ENCODE measurements at regions of chr10 and their contacts with region 1.

Region 1: GRCh38 chr10:80684259-80684658 is 146.6 kb downstream of the SH2D4B start:
- DNase-seq: no peak
- H3K4me3 ChIP-seq: no peak overlapping the region
- H3K27ac ChIP-seq: no peak overlapping the region
- H3K4me1 ChIP-seq: no peaks in the 10 kb centered on the region
- H3K27me3 ChIP-seq: no peaks in the 10 kb centered on the region
- CTCF ChIP-seq: no peak

Region 2: DNA sequence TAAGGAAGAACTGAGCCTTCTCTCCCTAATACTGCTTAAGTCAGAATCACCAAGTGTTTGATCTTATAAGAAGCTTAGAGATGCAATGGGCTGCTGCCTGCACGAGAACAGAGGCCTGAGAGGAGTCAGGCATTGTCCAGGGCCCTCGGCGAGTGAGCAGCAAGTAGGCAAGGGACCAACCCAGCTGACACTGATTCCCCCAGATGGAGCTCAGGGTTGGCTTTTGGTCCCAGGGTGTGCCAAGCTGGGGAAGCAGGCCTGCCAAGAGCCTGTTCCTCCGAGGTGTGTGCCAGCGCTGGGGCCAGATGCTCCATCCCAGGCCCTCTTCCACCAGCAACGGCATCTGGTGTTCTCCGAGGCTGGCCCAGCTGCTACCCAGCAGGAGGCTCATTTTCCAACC is 1837.5 kb before region 1 on chr10:
- intact Hi-C with region 1: loop called (anchors 10 kb)
- DNase-seq: no peak
- H3K4me3 ChIP-seq: no peak overlapping the region
- H3K27ac ChIP-seq: no peak overlapping the region
- H3K4me1 ChIP-seq: no peaks in the 10 kb centered on the region
- H3K27me3 ChIP-seq: no peaks in the 10 kb centered on the region
- CTCF ChIP-seq: no peak

Region 3: GRCh38 chr10:80599424-80599847 is 84.8 kb before region 1 on chr10:
- intact Hi-C with region 1: no loop called
- DNase-seq: no peak
- H3K4me3 ChIP-seq: no peak overlapping the region
- H3K27ac ChIP-seq: no peak overlapping the region
- H3K4me1 ChIP-seq: no peaks in the 10 kb centered on the region
- H3K27me3 ChIP-seq: no peaks in the 10 kb centered on the region
- CTCF ChIP-seq: peak; percentile 16 to 31

Measured in tibial artery (tissue), 4 donors.